Panc1 (cell line): ENCODE measurements at regions of chr1 and their contacts with region 1.

Region 1: GRCh38 chr1:36034692-36035091 is 49.2 kb upstream of the TEKT2 start:
- DNase-seq: peak; percentile 46
- ATAC-seq: no peak
- H3K4me3 ChIP-seq: no peak overlapping the region
- H3K27ac ChIP-seq: no peak overlapping the region
- H3K4me1 ChIP-seq: no peaks in the 10 kb centered on the region
- H3K27me3 ChIP-seq: no peaks in the 10 kb centered on the region
- CTCF ChIP-seq: no peak

Region 2: GRCh38 chr1:35958558-35958957 is 76.1 kb before region 1 on chr1:
- CTCF ChIA-PET with region 1: no interaction called
- POLR2A ChIA-PET with region 1: interaction called, 10 read pairs
- in situ Hi-C with region 1: no loop called
- intact Hi-C with region 1: no loop called
- DNase-seq: no peak
- ATAC-seq: no peak
- H3K4me3 ChIP-seq: no peak overlapping the region
- H3K27ac ChIP-seq: no peak overlapping the region
- H3K4me1 ChIP-seq: peaks cover 4% of the 10 kb centered on the region; the same call in 1 of the 2 replicates
- H3K27me3 ChIP-seq: no peaks in the 10 kb centered on the region
- CTCF ChIP-seq: no peak